ENCODE measurements at regions of chr18 and their contacts with region 1.

Region 1: DNA sequence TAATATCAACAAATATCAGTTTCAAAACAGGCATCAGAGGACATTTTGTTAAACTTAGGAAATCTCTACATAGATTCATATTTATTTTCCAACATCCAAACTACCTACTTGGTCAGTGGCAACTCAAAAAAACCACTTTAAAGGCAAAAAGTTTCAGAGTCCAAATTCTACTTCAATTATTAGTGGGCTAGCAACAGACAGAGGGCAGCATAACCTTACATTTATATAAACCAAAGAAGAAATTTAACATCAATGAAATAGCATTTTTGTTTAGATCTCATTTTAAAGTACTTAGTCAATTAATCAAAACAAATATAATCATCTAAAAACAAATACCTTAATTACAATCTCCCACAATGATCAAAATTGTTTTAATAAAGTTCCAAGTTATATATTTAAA is 33.3 kb downstream of the RTTN start:
- DNase-seq: no peak
- H3K4me3 ChIP-seq: no peak overlapping the region
- CTCF ChIP-seq: peak; percentile 30

Region 2: GRCh38 chr18:69874058-69874457 is 298.2 kb before region 1 on chr18:
- CTCF ChIA-PET with region 1: no interaction called
- POLR2A ChIA-PET with region 1: no interaction called
- DNase-seq: no peak
- H3K4me3 ChIP-seq: no peak overlapping the region
- CTCF ChIP-seq: no peak

Region 3: GRCh38 chr18:69968039-69968438 is 204.2 kb before region 1 on chr18:
- CTCF ChIA-PET with region 1: no interaction called
- POLR2A ChIA-PET with region 1: no interaction called
- DNase-seq: no peak
- H3K4me3 ChIP-seq: no peak overlapping the region
- CTCF ChIP-seq: no peak

Region 4: DNA sequence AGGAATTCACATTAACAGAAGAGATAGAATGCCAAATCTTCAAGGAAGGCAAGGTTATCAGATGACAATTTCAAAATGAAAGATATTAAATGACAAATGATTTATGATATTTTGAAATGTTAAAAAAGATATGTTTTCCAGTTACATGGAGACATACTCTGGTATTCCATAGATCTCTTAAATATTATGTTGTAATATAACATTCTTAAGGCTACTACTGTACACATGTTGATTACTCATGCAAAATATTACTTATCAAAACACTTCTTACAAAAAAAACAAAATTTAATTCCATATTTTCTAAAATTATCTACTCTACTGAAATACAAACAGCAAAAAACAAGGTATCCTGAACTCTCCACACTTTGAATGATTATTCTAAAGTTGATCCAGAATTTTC is 10.3 kb after region 1 on chr18:
- CTCF ChIA-PET with region 1: interaction called, 23 read pairs
- POLR2A ChIA-PET with region 1: no interaction called
- DNase-seq: no peak
- H3K4me3 ChIP-seq: no peak overlapping the region
- CTCF ChIP-seq: no peak

Region 5: GRCh38 chr18:70188113-70188512 is 15.9 kb after region 1 on chr18:
- CTCF ChIA-PET with region 1: interaction called, 23 read pairs
- POLR2A ChIA-PET with region 1: no interaction called
- DNase-seq: no peak
- H3K4me3 ChIP-seq: no peak overlapping the region
- CTCF ChIP-seq: no peak

Region 6: GRCh38 chr18:70195852-70196434 is 23.7 kb after region 1 on chr18:
- CTCF ChIA-PET with region 1: interaction called, 47 read pairs
- POLR2A ChIA-PET with region 1: no interaction called
- DNase-seq: no peak
- H3K4me3 ChIP-seq: no peak overlapping the region
- CTCF ChIP-seq: peak; percentile 63

Region 7: DNA sequence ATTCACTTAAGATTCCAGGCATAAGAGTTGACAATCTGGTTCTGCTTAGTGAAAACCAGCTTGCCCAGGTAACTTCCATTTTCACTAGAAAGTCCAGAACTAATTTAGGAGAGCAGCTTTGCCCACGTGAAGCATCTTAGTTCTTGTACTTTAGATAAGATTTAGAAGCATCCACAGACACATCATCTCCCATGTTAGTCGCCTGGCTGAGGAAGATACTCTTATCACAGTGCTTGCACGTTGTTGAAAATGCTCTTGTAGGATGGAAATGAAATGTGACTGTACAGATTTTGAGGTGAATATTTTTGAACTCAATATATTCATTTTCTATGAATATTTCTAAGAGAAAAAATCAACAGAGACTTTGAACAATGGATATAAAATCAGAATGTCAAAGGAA is 276.4 kb after region 1 on chr18:
- CTCF ChIA-PET with region 1: interaction called, 218 read pairs
- POLR2A ChIA-PET with region 1: no interaction called
- DNase-seq: no peak
- H3K4me3 ChIP-seq: no peak overlapping the region
- CTCF ChIP-seq: no peak

Region 8: DNA sequence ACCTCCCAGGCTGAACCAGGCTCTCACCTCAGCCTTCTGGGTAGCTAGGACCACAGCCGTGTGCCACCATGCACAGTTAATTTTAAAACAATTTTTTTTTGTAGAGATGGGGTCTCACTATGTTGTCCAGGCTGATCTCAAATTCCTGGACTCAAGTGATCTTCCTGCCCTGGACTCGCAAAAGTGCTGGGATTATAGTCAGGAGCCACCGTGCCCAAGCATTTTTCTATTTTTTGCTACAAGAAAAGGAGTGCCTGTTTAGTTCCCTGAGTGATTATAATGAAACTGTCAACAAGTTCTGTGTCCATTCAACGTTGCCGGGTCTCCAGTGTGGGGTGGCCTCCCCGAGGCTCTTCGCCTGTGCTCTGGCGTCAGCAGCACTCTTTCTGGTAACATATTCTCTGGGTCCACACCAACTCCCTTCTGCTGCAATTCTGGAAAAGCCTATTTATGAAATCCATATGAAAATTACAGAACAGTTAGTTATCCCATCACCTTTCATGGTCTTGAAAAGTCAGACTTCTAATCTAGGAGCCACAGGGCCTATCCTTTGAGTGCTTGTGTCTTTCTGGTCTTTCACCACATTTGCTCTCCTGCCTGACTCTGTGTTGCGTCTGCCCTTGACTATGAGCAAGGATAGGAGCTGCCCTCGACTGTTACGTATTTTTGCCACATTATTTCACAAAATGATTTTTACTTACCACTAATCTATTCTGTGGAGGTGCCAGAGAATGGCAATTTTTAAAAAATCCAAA is 289.3 kb after region 1 on chr18:
- CTCF ChIA-PET with region 1: interaction called, 218 read pairs
- POLR2A ChIA-PET with region 1: no interaction called
- DNase-seq: no peak
- H3K4me3 ChIP-seq: no peak overlapping the region
- CTCF ChIP-seq: no peak

Measured in AG04449 (cell line).